ENCODE measurements at regions of chr22 and their contacts with region 1.

Region 1: DNA sequence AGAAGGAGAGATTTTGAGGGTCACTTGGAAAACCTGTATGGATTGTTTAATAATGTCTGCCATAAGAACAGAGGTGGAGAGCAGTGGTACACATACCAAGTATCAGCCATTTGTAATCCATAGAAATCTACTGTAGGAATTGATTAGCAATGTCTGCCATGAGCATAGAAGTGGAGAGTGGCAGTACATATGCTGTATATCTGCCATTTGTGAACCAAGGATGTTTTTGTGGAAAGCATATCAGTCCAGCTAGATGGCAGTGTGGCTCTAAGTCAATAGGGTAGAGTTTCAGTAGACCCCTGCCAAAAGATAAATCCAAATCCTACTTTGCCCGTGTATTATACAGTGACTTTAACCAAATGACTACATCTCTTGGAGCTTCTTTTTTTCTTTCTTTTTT is 82.9 kb upstream of the SEZ6L start:
- DNase-seq: no peak
- ATAC-seq: no peak
- H3K4me3 ChIP-seq: no peak overlapping the region
- H3K27ac ChIP-seq: no peak overlapping the region
- H3K4me1 ChIP-seq: no peaks in the 10 kb centered on the region
- H3K27me3 ChIP-seq: peaks cover 0 to 24% (median 16%) of the 10 kb centered on the region in 7 donors
- CTCF ChIP-seq: peak in 4 of 9 donors; percentile 15 to 45 (median 35)

Region 2: GRCh38 chr22:26321469-26321913 is 235.1 kb after region 1 on chr22:
- intact Hi-C with region 1: loop called in 2 of 10 experiments (anchors 10 kb)
- DNase-seq: peak; percentile 51 to 55
- ATAC-seq: peak; percentile 88 to 98 (median 95)
- H3K4me3 ChIP-seq: no peak overlapping the region
- H3K27ac ChIP-seq: peak overlapping the region in 7 of 10 donors; percentile 8 to 72 (median 45)
- H3K4me1 ChIP-seq: peaks cover 0 to 11% (median 0%) of the 10 kb centered on the region in 9 donors
- H3K27me3 ChIP-seq: peaks cover 0 to 10% (median 0%) of the 10 kb centered on the region in 7 donors
- CTCF ChIP-seq: no peak

Region 3: DNA sequence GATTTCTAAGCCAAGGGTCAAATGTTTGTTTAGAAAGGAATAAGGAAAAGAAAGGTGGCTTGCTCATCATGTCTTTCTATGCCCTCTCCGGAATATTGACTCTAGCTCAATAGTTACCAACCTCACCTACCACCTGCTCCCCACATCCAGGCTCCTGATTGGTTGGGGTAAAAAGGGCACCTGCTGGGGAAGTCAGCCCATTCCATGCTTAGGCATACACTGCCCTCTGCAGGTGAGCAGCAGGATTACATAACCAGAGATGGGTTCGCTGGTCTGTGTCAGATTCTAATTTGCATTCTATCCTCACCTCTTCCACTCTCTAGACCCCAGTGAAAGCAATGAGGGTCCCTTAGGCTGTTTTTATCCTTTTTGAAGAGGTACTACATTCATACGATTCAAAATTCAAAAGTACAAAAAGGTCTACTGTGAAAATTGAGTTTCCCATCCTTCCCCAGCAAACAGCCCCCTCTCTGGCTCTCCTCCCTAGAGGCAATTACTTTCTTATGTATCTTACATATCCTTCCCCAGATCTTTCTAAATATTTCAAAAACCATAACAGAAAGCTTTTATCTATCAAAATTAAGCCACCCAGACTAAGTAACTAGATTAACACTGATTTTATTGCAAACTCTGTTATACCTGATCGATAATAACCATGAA is 244.7 kb after region 1 on chr22:
- intact Hi-C with region 1: loop called in 8 of 10 experiments (anchors 2 to 10 kb)
- DNase-seq: peak in 1 of 2 donors; percentile 15
- ATAC-seq: peak in 2 of 8 donors; percentile 49 to 65
- H3K4me3 ChIP-seq: no peak overlapping the region
- H3K27ac ChIP-seq: no peak overlapping the region
- H3K4me1 ChIP-seq: no peaks in the 10 kb centered on the region
- H3K27me3 ChIP-seq: peaks cover 0 to 30% (median 16%) of the 10 kb centered on the region in 7 donors
- CTCF ChIP-seq: peak; percentile 47 to 83 (median 78)